ENCODE measurements at regions of chr14 and their contacts with region 1.

Region 1: GRCh38 chr14:58171090-58171489 is 19.1 kb upstream of the ARMH4 start:
- DNase-seq: peak; percentile 33 to 46
- ATAC-seq: peak; percentile 76 to 95 (median 84)
- H3K4me3 ChIP-seq: no peak overlapping the region
- H3K27ac ChIP-seq: no peak overlapping the region
- H3K4me1 ChIP-seq: peaks cover 0 to 12% (median 4%) of the 10 kb centered on the region in 9 donors
- H3K27me3 ChIP-seq: no peaks in the 10 kb centered on the region
- CTCF ChIP-seq: no peak

Region 2: DNA sequence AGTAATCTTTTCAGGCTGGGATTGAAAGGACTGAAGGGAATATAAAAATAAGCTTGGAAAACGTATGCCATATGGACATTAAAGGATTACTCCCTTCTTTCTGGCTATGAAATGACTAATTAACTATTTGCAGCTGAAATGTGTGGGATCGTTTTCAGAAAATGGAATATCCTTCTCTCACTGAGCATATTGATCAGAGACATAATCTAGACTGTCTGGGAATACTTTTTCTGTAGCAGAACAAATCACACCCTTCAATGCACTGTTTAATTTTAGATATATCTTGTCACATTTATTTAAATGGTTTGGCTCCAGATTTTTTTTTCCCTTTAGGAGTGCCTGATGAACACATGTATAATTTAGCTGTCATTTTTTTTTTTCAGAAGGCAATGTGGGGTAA is 18.1 kb after region 1 on chr14:
- intact Hi-C with region 1: loop called in 1 of 10 experiments (anchors 2 kb)
- DNase-seq: no peak
- ATAC-seq: no peak
- H3K4me3 ChIP-seq: no peak overlapping the region
- H3K27ac ChIP-seq: no peak overlapping the region
- H3K4me1 ChIP-seq: peaks cover 0 to 10% (median 0%) of the 10 kb centered on the region in 9 donors
- H3K27me3 ChIP-seq: no peaks in the 10 kb centered on the region
- CTCF ChIP-seq: no peak